Activated T-helper 2 cell treated with anti-CD3 and anti-CD28 coated beads, Interferon-gamma antibody, Interleukin-2, Interleukin-4, amounts not matched to agents 10 μg/mL and 5 μg/mL and 100 μg/mL, durations not matched to agents 14 hours and 24 hours and 36 hours (primary cell): ENCODE measurements at regions of chr18 and their contacts with region 1.

Region 1: DNA sequence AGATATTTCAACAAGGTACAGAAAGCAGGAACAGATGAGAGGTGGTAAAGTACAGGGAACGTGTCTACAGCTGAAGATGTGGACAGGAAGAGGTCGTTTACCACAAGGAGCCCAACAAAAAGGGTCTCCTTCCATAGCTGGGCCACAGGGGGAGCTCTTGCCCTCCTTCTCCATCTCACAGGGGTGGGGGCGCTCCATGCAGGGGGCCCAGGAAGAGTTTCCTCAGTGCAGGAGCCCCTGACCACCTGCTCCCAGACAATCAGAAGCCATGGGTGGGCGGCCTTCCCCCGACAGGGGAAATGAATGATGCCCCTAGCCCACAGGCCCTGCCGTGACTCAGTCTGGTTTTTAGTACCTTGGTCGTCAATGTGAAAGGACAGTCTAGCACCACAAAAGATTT is 163.6 kb upstream of the ZNF516 start:
- DNase-seq: no peak
- H3K4me3 Mint-ChIP-seq: no peak overlapping the region
- H3K27ac Mint-ChIP-seq: no peak overlapping the region
- H3K4me1 Mint-ChIP-seq: peaks cover 21% of the 10 kb centered on the region
- H3K27me3 Mint-ChIP-seq: peaks cover 53% of the 10 kb centered on the region

Region 2: DNA sequence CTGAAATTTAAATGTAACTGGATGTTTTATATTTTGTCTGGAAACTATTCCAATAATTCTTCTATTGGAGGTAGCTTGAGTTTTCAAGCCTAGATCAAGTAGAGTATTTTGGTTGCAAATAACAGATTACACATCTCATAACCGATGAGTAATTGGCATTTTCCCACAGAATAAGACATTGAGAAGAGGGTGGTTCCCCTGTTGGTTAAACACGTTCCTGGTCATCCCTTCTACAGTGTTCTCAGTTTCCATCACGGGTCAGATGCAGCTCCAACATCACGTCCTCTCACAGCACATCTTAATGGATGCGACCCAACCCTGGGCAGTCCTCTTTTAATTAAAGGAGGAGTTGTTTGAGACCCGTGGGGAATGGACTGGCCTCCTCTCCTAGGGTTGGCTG is 14.6 kb before region 1 on chr18:
- intact Hi-C with region 1: loop called (anchors 1 kb)
- DNase-seq: no peak
- H3K4me3 Mint-ChIP-seq: no peak overlapping the region
- H3K27ac Mint-ChIP-seq: no peak overlapping the region
- H3K4me1 Mint-ChIP-seq: no peaks in the 10 kb centered on the region
- H3K27me3 Mint-ChIP-seq: peaks cover 11% of the 10 kb centered on the region

Region 3: GRCh38 chr18:76686737-76687262 is 28.2 kb after region 1 on chr18:
- intact Hi-C with region 1: loop called (anchors 1 kb)
- DNase-seq: no peak
- H3K4me3 Mint-ChIP-seq: no peak overlapping the region
- H3K27ac Mint-ChIP-seq: peak overlapping the region; percentile 52
- H3K4me1 Mint-ChIP-seq: peaks cover 15% of the 10 kb centered on the region
- H3K27me3 Mint-ChIP-seq: peaks cover 22% of the 10 kb centered on the region